ENCODE measurements at regions of chr12 and their contacts with region 1.

Region 1: GRCh38 chr12:15522565-15523187 is 200.4 kb downstream of the PTPRO start:
- DNase-seq: peak in 2 of 4 donors; percentile 52 to 58
- ATAC-seq: peak; percentile 86
- H3K4me3 ChIP-seq: no peak overlapping the region
- H3K27ac ChIP-seq: no peak overlapping the region
- H3K4me1 ChIP-seq: no peaks in the 10 kb centered on the region
- H3K27me3 ChIP-seq: peaks cover 4 to 25% of the 10 kb centered on the region in 2 donors
- CTCF ChIP-seq: peak; percentile 39 to 48

Region 2: GRCh38 chr12:15276088-15276698 is 246.5 kb before region 1 on chr12:
- intact Hi-C with region 1: loop called in 1 of 2 experiments (anchors 5 kb)
- DNase-seq: peak in 1 of 4 donors; percentile 35
- ATAC-seq: peak; percentile 56
- H3K4me3 ChIP-seq: no peak overlapping the region
- H3K27ac ChIP-seq: no peak overlapping the region
- H3K4me1 ChIP-seq: peaks cover 6 to 37% of the 10 kb centered on the region in 2 donors
- H3K27me3 ChIP-seq: no peaks in the 10 kb centered on the region
- CTCF ChIP-seq: peak; percentile 42 to 54

Region 3: GRCh38 chr12:15956413-15957185 is 433.9 kb after region 1 on chr12:
- intact Hi-C with region 1: no loop called
- DNase-seq: peak in 2 of 4 donors; percentile 4 to 26
- ATAC-seq: peak; percentile 42
- H3K4me3 ChIP-seq: no peak overlapping the region
- H3K27ac ChIP-seq: no peak overlapping the region
- H3K4me1 ChIP-seq: no peaks in the 10 kb centered on the region
- H3K27me3 ChIP-seq: no peaks in the 10 kb centered on the region
- CTCF ChIP-seq: no peak